H1 (cell line): ENCODE measurements at regions of chr17 and their contacts with region 1.

Region 1: DNA sequence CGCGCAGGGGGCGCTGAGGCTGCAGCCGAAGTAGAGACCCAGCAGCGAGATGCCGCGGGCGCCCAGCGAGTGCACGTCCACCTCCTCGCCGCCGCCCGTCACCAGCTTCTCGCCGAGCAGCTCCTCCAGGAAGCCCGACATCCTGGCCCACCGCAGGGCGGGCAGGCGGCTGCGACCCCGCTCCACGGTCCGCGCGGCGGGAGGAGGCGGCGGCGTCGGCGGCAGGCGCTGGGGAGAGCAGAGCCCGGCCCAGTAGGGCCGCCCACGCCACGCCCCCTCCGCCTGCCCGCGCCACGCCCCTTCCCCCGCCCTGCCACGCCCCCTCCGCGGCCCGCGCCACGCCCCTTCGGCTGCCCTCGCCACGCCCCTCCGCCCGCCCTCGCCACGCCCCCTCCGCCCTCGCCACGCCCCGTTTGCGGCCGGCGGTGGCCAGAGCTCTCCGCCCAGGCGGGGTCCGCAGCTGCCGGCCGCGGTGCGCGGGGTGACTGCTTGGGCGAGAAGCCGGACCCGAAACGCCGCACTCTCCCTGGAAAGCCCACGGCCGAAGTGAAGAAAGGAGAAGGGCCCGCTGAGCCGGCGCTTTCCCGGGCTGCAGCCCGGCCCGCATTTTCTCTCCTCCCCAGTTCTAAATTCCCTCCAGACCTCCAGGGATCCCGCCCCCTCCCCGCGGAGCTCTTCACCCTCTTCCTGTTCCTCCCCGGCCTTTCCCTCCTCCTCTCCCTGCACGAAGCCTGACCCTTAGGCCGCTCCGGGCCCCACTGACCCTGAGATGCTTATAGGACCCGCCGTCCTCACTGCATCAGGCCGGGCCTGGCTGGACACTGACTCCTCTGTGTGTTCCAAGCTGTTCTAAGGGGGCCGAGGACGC is at the start of gene NXN:
- DNase-seq: peak in 1 of 2 experiments; percentile 98
- H3K4me3 ChIP-seq: peak within 1 kb of the TSS; percentile 73 to 81 (median 76)
- H3K27ac ChIP-seq: peak within 1 kb of the TSS; percentile 31; the same call in 1 of the 2 replicates
- H3K4me1 ChIP-seq: peaks cover 5 to 22% (median 12%) of the 10 kb centered on the region in 4 experiments
- H3K27me3 ChIP-seq: no peaks in the 10 kb centered on the region
- CTCF ChIP-seq: peak in 2 of 3 experiments; percentile 18 to 38; a peak in 3 of 4 replicates
- EP300 ChIP-seq: no peak
- POLR2A ChIP-seq: peak in 1 of 2 experiments; percentile 67; a peak in 2 of 3 replicates
- RAD21 ChIP-seq: peak; percentile 17 to 38; a peak in 2 of 4 replicates
- total RNA-seq, gene NXN: 88.4 and 94.1 TPM in 2 replicates

Region 2: GRCh38 chr17:794876-795275 is 184.9 kb before region 1 on chr17:
- CTCF ChIA-PET with region 1: interaction called, 258 read pairs
- POLR2A ChIA-PET with region 1: interaction called, 14 read pairs
- DNase-seq: peak in 1 of 2 experiments; percentile 83
- H3K4me3 ChIP-seq: no peak overlapping the region
- H3K27ac ChIP-seq: 0 out of 2 replicates have a peak overlapping the region, but pooled peaks have one; percentile 0
- H3K4me1 ChIP-seq: peaks cover 0 to 13% (median 2%) of the 10 kb centered on the region in 4 experiments; a peak in 5 of 7 replicates
- H3K27me3 ChIP-seq: no peaks in the 10 kb centered on the region
- CTCF ChIP-seq: peak; percentile 86 to 93 (median 92)
- EP300 ChIP-seq: no peak
- POLR2A ChIP-seq: no peak
- RAD21 ChIP-seq: peak; percentile 93 to 95

Region 3: DNA sequence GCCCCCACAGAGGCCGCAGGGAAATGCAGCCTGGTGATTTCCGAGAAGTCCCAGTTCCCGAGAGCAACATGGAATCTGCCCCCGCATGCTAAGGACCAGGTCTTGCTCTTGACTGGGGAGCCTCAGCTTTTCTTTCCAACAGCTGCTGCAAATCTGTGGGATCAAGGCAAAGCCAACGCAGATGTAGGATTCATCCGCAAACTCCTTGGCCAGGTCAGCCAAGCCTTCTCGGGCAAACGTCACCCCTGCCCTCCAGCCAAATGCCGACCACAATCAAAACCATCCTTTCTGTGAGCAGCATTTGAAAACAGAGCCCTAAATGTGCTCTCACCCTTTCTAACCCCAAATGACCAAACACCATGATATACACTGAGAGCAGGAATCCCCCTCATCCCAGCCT is 143.6 kb before region 1 on chr17:
- CTCF ChIA-PET with region 1: interaction called, 20 read pairs
- POLR2A ChIA-PET with region 1: interaction called, 4 read pairs
- DNase-seq: no peak
- H3K4me3 ChIP-seq: no peak overlapping the region
- H3K27ac ChIP-seq: no peak overlapping the region
- H3K4me1 ChIP-seq: peaks cover 0 to 3% (median 0%) of the 10 kb centered on the region in 4 experiments; a peak in 3 of 7 replicates
- H3K27me3 ChIP-seq: no peaks in the 10 kb centered on the region
- CTCF ChIP-seq: no peak
- EP300 ChIP-seq: no peak
- POLR2A ChIP-seq: no peak
- RAD21 ChIP-seq: no peak

Region 4: GRCh38 chr17:951325-952132 is 28.2 kb before region 1 on chr17:
- CTCF ChIA-PET with region 1: interaction called, 9 read pairs
- POLR2A ChIA-PET with region 1: interaction called, 13 read pairs
- DNase-seq: peak; percentile 75 to 77
- H3K4me3 ChIP-seq: peak overlapping the region in 1 of 4 experiments; percentile 39; a peak in 3 of 8 replicates
- H3K27ac ChIP-seq: peak overlapping the region; percentile 66
- H3K4me1 ChIP-seq: peaks cover 10 to 23% (median 13%) of the 10 kb centered on the region in 4 experiments
- H3K27me3 ChIP-seq: no peaks in the 10 kb centered on the region
- CTCF ChIP-seq: no peak
- EP300 ChIP-seq: no peak
- POLR2A ChIP-seq: peak in 1 of 2 experiments; percentile 79; a peak in 1 of 3 replicates
- RAD21 ChIP-seq: 0 out of 4 replicates have a peak, but pooled peaks of 1 of the 2 experiments have one; percentile 2

Region 5: GRCh38 chr17:1203111-1203966 is 223.6 kb after region 1 on chr17:
- CTCF ChIA-PET with region 1: no interaction called
- POLR2A ChIA-PET with region 1: no interaction called
- DNase-seq: peak in 1 of 2 experiments; percentile 94
- H3K4me3 ChIP-seq: peak overlapping the region; percentile 53 to 74 (median 68)
- H3K27ac ChIP-seq: peak overlapping the region; percentile 49; the same call in 1 of the 2 replicates
- H3K4me1 ChIP-seq: no peaks in the 10 kb centered on the region
- H3K27me3 ChIP-seq: peaks cover 0 to 6% (median 4%) of the 10 kb centered on the region in 4 experiments; a peak in 3 of 7 replicates
- CTCF ChIP-seq: no peak
- EP300 ChIP-seq: no peak
- POLR2A ChIP-seq: peak in 1 of 2 experiments; percentile 70; a peak in 1 of 3 replicates
- RAD21 ChIP-seq: no peak